ENCODE measurements at regions of chr3 and their contacts with region 1.

Region 1: GRCh38 chr3:128426128-128426921 is 40.4 kb downstream of the DNAJB8 start:
- DNase-seq: no peak
- H3K4me3 ChIP-seq: no peak overlapping the region
- CTCF ChIP-seq: no peak
- POLR2A ChIP-seq: no peak

Region 2: DNA sequence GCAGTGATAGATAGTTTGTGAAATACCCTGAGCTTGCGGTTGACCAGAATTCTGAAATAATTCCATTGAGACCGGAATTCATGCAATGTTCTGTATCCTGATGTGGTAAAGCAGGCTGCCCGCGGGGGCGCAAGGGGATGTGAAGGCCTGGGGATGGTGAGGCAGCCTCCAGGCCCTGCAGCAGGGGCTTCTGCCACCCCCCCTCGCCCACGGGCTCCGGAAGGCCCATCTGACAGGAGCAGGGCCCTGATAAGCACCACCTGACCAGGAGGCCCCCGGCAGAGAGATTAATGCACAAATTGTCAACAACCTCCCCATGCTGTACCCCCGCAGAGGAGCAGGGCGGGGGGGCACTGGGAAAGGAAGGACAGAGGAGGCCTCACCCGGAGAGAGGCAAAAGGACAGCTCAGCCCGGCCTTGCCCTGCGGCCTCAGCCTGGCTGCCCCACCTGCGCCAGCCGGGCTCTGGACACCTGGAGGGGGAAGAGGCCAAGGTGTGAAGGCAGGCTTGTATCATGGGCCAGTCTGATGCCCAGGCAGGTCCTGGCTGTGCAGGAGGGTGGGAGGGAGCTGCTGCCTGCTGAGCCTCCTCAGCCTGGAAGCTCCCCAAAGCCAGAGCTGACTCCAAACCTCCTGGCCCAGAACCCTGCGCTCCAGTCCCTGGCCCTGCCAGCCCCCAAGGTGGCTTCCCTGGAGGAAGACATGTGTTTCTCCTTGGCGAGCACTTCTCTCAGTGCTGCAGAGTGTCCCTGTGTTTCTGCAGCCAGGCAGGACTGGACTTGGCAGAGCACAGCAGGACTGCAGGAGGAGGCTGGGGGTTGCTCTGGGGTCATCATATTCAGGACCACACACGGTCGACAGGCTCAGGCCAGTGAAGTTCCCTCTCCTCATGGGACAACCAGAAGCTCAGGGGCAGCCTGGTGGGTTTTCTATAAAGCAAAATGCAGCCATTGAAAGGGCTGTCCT is 177.8 kb after region 1 on chr3:
- intact Hi-C with region 1: loop called (anchors 5 kb)
- DNase-seq: no peak
- H3K4me3 ChIP-seq: no peak overlapping the region
- CTCF ChIP-seq: no peak
- POLR2A ChIP-seq: no peak